GM10248 (cell line): ENCODE measurements at regions of chr16 and their contacts with region 1.

Region 1: DNA sequence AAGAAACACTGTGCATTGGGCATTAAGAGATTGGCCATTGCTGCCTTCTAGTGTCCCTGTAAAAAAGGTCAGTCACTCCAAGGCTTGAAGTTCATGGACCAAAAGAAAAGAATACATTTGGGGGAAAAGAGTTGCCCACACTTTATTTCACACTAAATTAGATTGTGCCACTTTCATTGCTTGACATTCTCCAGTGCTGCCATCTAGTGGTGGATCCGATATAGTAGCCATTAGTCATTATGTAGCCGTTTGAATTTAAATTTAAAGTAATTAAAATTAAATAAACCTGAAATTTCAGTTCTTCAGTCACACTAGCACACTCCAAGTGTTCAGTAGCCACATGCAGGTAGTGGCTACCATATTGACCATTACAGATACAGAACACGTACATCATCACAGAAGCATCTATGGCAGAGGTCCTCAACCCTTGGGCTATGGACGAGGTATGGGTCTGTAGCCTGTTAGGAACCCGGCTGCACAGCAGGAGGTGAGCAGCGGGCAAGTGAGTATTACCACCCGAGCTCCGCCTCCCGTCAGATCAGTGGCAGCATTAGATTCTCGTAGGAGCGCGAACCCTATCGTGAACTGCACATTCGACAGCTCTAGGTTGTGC is 21.9 kb upstream of the CDH5 start:
- DNase-seq: peak; percentile 55
- CTCF ChIP-seq: peak; percentile 70

Region 2: DNA sequence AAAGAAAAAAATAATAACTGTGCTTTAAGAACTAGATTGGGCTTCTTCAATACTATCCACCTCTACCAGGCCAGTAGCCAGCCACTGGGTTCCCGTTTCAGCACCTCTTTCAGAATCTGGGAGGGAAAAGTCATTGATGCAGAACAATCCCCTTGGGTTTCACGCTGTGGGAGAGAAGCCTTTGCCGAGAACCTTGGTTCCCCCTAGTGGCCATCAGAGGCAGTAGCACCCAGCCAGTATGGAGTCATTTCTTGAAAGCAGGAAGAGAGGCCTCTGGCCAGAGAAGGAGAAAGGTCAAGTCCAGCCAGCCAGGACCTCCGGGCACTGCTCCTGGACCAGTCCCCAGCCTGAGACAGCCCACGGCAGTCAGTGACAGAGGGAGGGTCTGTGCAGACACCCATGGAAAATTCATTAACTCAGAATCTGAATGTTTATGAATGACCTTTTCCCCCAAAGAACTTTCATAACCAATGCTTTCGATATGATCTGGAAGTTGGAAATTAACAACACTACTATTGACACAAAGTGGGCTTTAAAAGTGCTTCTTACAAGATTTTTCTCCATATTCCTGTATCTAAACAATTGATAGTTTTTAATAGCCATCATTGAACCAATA is 29.3 kb before region 1 on chr16:
- CTCF ChIA-PET with region 1: interaction called, 150 read pairs
- POLR2A ChIA-PET with region 1: no interaction called
- DNase-seq: peak; percentile 82
- CTCF ChIP-seq: peak; percentile 97

Region 3: DNA sequence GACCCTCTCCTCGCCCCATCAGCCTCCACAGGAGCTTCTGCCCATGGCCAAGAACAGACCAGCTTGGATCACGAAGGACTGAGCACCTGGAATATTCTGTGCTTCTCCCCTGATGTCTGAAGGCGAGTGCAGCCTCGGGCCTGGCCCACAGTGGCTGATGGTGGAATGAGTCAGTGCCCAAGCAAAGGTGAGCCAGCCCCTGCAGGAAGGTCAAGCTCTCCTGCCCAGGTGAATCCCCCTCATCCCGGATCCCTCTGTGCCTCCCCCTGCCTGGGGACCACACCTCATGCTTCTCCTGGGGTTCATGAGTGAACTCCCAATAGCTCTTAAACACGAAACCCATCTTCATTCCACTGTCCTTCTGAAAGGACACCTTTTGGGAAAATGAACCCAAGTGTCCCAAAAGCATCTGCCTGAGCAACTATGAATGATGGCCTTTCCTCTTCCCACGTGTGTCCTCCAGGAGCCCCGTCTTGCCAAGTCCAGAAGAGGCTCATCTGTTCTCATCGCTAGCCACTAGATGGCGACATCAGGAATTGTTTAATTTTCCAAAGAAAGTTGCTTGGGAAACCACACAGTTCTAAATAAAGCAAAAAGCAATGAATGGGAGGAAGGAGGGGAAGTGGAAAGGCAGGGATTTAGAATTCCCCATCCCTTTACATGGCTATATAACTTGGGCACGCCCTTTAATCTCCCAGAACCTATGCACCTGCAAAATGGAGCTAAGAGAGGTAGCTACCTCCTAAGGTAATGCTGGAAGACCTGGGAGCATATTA is 12.7 kb after region 1 on chr16:
- CTCF ChIA-PET with region 1: interaction called, 134 read pairs
- POLR2A ChIA-PET with region 1: no interaction called
- DNase-seq: peak; percentile 71
- CTCF ChIP-seq: peak; percentile 79

Region 4: GRCh38 chr16:66364117-66364967 is 19.7 kb after region 1 on chr16:
- CTCF ChIA-PET with region 1: interaction called, 134 read pairs
- POLR2A ChIA-PET with region 1: no interaction called
- DNase-seq: no peak
- CTCF ChIP-seq: no peak